ENCODE measurements at regions of chr3 and their contacts with region 1.

Region 1: DNA sequence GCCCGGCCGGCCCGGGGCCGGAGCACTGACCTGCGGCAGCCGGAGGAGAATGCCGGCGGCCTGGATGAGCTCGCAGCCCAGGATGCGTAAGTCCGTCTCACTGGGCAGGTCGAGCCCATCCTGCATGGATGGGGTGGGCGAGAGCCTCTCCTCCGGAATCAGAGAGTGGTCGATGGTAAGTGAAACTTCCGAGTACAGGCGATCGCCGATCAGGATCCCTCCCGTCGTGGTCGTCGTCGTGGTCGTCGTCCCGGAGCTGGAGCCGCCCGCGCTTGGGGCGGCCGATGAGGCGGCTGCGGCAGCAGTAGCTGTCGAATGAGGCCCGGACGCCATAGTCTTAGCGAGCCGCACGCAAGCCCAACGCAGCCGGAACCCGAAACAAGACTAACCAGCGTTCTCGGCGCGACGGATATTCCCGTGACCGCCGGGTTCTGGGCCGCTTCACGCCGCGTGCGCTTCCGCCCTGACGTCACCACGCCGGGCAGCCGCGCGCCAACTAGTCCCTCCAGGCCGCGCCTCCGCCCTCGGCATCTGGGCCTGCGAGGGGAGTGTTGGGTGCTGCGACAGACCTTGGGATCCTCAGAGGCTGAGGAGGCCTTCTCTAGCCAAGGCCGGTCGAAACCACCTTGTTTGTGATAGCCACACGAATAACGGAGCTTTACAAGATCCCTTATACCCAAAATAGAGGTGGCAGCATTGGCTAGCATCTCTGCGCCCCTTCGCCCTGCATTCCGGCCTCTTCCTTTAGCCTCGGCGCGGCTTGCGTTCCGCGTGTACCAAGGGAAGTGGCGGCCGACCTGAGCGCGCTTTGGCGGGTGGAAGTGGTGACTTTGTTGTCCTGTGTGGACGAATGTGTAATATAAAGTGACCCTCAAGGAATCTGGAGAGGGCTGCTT is at the start of gene CCNL1:
- DNase-seq: peak; percentile 94 to 98 (median 97)
- ATAC-seq: peak; percentile 88
- H3K4me3 ChIP-seq: peak within 1 kb of the TSS; percentile 92
- H3K4me3 Mint-ChIP-seq: peak within 1 kb of the TSS; percentile 91 to 100 (median 96)
- H3K27ac ChIP-seq: peak within 1 kb of the TSS; percentile 97
- H3K27ac Mint-ChIP-seq: peak within 1 kb of the TSS; percentile 96 to 100 (median 98)
- H3K4me1 ChIP-seq: peaks cover 39 to 45% of the 10 kb centered on the region in 2 donors
- H3K4me1 Mint-ChIP-seq: peaks cover 37 to 69% (median 65%) of the 10 kb centered on the region in 7 donors
- H3K27me3 ChIP-seq: no peaks in the 10 kb centered on the region
- H3K27me3 Mint-ChIP-seq: no peaks in the 10 kb centered on the region
- total RNA-seq, gene CCNL1: 230 to 1,170 (median 374) TPM

Region 2: GRCh38 chr3:156483961-156484787 is 675.8 kb before region 1 on chr3:
- CTCF ChIA-PET with region 1: no interaction called
- POLR2A ChIA-PET with region 1: interaction called, 12 read pairs
- intact Hi-C with region 1: loop called (anchors 1 kb)
- DNase-seq: peak in 8 of 9 donors; percentile 35 to 68 (median 62)
- ATAC-seq: peak; percentile 88
- H3K4me3 ChIP-seq: peak overlapping the region; percentile 47
- H3K4me3 Mint-ChIP-seq: peak overlapping the region; percentile 52 to 85 (median 74)
- H3K27ac ChIP-seq: peak overlapping the region; percentile 63
- H3K27ac Mint-ChIP-seq: peak overlapping the region; percentile 76 to 95 (median 83)
- H3K4me1 ChIP-seq: peaks cover 21 to 25% of the 10 kb centered on the region in 2 donors
- H3K4me1 Mint-ChIP-seq: peaks cover 14 to 40% (median 35%) of the 10 kb centered on the region in 7 donors
- H3K27me3 ChIP-seq: no peaks in the 10 kb centered on the region
- H3K27me3 Mint-ChIP-seq: peaks cover 0 to 17% (median 0%) of the 10 kb centered on the region in 5 donors

Region 3: DNA sequence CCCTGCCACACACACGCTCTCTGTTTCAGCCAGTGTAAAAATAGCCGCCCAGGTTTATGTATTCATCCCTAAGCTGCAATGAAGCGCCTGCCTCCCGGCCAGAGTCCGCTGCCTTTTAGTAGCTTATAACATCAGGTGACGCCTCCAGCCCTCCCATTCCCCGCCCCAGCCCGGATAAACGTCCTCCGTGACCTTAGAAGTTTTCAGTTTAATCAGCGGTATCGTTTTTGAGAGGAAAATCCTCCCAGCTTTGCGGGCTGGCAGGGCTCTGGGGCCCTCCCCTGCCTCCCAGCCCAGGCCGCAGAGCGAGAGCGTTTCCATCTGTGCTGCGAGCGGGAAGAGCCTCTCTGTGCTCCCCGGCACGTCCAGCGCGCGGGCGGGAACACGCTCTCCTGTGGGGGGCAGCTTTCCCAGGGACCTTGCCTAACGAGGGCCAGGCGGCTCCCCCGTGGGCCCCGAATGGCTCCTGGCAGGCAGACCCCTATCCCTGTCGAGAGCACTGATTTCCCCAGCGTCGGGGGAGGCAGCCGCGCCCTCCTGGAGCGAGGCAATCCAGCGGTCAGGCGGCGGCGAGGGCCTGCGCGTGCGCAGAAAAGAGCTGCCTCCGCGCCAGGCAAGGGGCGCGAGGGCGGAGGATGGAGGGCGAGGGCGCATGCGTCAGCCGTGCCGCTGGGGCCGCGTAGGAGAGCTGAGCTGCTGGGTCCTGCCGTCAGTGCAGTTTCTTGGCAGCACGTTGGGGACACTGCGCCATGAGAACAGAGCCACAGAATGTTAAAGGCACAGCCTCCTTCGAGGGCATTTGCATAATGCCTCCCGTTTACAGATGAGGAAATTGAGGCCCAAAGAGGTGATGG is 71.2 kb before region 1 on chr3:
- CTCF ChIA-PET with region 1: no interaction called
- POLR2A ChIA-PET with region 1: interaction called, 21 read pairs
- intact Hi-C with region 1: loop called (anchors 1 kb)
- DNase-seq: peak; percentile 90 to 97 (median 93)
- ATAC-seq: peak; percentile 95
- H3K4me3 ChIP-seq: peak overlapping the region; percentile 84
- H3K4me3 Mint-ChIP-seq: peak overlapping the region; percentile 81 to 89 (median 87)
- H3K27ac ChIP-seq: peak overlapping the region; percentile 83
- H3K27ac Mint-ChIP-seq: peak overlapping the region; percentile 92 to 98 (median 96)
- H3K4me1 ChIP-seq: peaks cover 11 to 30% of the 10 kb centered on the region in 2 donors
- H3K4me1 Mint-ChIP-seq: peaks cover 11 to 79% (median 23%) of the 10 kb centered on the region in 7 donors
- H3K27me3 ChIP-seq: no peaks in the 10 kb centered on the region
- H3K27me3 Mint-ChIP-seq: peaks cover 0 to 6% (median 0%) of the 10 kb centered on the region in 5 donors

Region 4: DNA sequence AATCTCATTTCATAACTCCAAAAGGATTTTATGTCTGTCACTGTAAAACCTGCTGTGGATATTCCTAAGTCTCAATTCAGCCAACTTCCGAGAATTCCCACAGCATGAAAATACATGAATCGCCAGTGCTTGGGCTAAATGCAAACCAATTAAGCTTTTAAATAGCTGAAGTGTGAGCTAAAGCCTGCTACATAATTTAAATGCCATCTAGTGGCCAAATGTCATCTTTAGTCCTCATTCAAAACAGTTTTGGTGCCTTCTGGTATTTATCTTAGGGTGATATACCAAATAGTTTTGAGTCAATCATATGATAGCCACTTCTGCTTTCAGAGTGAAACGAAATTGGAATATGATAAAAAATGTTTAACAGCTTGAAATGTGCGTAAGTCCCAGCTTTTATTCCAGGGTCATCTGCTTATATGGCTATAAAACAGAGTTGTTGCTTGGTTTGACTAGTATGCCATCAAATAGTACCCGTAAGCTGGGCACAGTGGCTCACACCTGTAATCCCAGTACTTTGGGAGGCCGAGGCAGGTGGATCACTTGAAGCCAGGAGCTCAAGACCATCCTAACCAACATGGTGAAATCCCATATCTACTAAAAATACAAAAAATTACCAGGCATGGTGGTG is 41.8 kb after region 1 on chr3:
- CTCF ChIA-PET with region 1: interaction called, 3 read pairs
- POLR2A ChIA-PET with region 1: interaction called, 18 read pairs
- intact Hi-C with region 1: loop called (anchors 1 to 2 kb)
- DNase-seq: peak in 5 of 9 donors; percentile 10 to 37 (median 16)
- ATAC-seq: peak; percentile 51
- H3K4me3 ChIP-seq: no peak overlapping the region
- H3K4me3 Mint-ChIP-seq: no peak overlapping the region
- H3K27ac ChIP-seq: no peak overlapping the region
- H3K27ac Mint-ChIP-seq: no peak overlapping the region
- H3K4me1 ChIP-seq: no peaks in the 10 kb centered on the region
- H3K4me1 Mint-ChIP-seq: no peaks in the 10 kb centered on the region
- H3K27me3 ChIP-seq: no peaks in the 10 kb centered on the region
- H3K27me3 Mint-ChIP-seq: peaks cover 0 to 11% (median 0%) of the 10 kb centered on the region in 5 donors

Region 5: GRCh38 chr3:158801696-158802408 is 1641.8 kb after region 1 on chr3 and contains the start of gene MFSD1:
- CTCF ChIA-PET with region 1: no interaction called
- POLR2A ChIA-PET with region 1: interaction called, 3 read pairs
- intact Hi-C with region 1: loop called in 1 of 2 experiments (anchors 5 kb)
- DNase-seq: peak; percentile 73 to 91 (median 83)
- ATAC-seq: peak; percentile 94
- H3K4me3 ChIP-seq: peak within 1 kb of the TSS; percentile 88
- H3K4me3 Mint-ChIP-seq: peak within 1 kb of the TSS; percentile 84 to 93 (median 90)
- H3K27ac ChIP-seq: peak within 1 kb of the TSS; percentile 76
- H3K27ac Mint-ChIP-seq: peak within 1 kb of the TSS; percentile 58 to 98 (median 92)
- H3K4me1 ChIP-seq: peaks cover 9 to 11% of the 10 kb centered on the region in 2 donors
- H3K4me1 Mint-ChIP-seq: peaks cover 24 to 50% (median 43%) of the 10 kb centered on the region in 7 donors
- H3K27me3 ChIP-seq: no peaks in the 10 kb centered on the region
- H3K27me3 Mint-ChIP-seq: peaks cover 0 to 24% (median 0%) of the 10 kb centered on the region in 5 donors
- total RNA-seq, gene MFSD1: 24.6 to 66.0 (median 31.1) TPM